Ascending aorta (tissue), 2 donors: ENCODE measurements at regions of chr19 and their contacts with region 1.

Region 1: GRCh38 chr19:49983645-49984229 is 22.8 kb upstream of the SIGLEC11 start:
- DNase-seq: peak in 1 of 2 donors; percentile 74
- H3K4me3 ChIP-seq: no peak overlapping the region
- H3K27ac ChIP-seq: no peak overlapping the region
- H3K4me1 ChIP-seq: no peaks in the 10 kb centered on the region
- H3K27me3 ChIP-seq: no peaks in the 10 kb centered on the region
- CTCF ChIP-seq: peak; percentile 73 to 78 (median 75)

Region 2: DNA sequence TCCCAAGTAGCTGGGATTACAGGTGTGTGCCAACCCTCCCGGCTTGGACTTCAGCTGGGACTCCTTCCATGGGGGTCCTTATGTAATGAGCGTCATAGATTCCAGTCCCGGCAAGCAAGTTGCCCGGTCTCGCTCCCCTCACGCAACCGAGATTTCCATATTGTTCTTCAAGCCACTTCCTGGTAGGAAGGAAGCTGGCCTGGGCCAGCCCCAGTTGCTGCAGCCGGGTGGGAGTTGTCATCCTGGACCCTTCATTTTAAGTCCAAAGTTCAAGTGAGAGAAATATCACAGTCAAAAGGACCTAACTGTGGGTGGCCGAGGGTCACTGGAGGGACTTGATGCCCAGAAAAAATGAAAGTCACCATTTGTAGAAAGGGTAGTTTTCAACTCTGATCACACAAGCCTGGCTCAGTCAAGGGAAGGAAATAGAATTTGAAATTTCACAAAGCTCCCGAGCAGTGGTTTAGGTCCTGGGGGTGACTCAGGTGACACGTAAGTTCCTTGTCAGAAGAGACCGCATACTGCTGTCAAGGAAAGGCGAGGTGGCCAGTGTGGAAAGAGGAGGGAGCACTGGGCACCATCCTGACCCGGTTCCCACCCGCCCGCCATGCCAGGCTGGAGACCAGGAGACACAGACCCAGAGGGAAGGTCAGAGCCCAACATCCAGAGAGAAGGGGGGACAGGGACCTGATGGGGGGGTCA is 1223.1 kb before region 1 on chr19:
- intact Hi-C with region 1: no loop called
- DNase-seq: no peak
- H3K4me3 ChIP-seq: no peak overlapping the region
- H3K27ac ChIP-seq: no peak overlapping the region
- H3K4me1 ChIP-seq: no peaks in the 10 kb centered on the region
- H3K27me3 ChIP-seq: no peaks in the 10 kb centered on the region
- CTCF ChIP-seq: no peak

Region 3: DNA sequence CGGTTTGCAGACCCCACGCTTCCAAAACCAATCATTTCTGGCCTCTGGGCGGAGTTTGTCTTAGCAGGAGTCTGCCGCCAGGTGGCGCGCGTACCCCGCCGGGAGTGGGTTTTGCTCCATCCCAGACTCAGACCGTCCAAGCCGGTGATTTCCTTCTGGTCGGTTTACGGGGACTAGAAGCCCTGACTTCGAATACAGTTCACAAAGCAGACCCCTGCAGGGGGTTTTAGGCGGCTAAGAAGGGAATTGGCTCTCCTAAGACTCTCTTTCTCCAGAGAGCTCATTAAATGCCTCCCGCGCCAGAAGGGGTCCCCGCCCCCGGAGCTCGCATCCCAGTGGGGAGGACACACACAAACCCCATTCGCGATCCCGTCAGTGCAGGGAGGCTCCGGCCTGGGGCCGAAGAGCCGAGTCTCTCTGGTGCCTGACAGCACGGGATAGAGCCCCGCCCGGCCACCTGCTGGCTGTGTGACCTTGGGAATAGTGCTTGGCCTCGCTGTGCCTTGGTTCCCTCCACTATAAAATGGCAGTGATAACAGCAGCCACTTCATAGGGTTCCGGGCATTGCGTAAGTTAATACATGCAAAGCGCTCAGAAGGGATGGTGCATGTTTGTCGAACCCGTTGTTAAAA is 45.9 kb before region 1 on chr19:
- intact Hi-C with region 1: loop called (anchors 1 kb)
- DNase-seq: peak in 1 of 2 donors; percentile 78
- H3K4me3 ChIP-seq: peak overlapping the region in 1 of 2 donors; percentile 30
- H3K27ac ChIP-seq: no peak overlapping the region
- H3K4me1 ChIP-seq: peaks cover 0 to 3% of the 10 kb centered on the region in 2 donors
- H3K27me3 ChIP-seq: no peaks in the 10 kb centered on the region
- CTCF ChIP-seq: peak; percentile 90 to 97 (median 95)

Region 4: GRCh38 chr19:50003810-50004419 is 20.2 kb after region 1 on chr19:
- intact Hi-C with region 1: loop called (anchors 2 kb)
- DNase-seq: peak; percentile 46 to 90
- H3K4me3 ChIP-seq: peak overlapping the region in 1 of 2 donors; percentile 50
- H3K27ac ChIP-seq: peak overlapping the region; percentile 89 to 95
- H3K4me1 ChIP-seq: peaks cover 22 to 24% of the 10 kb centered on the region in 2 donors
- H3K27me3 ChIP-seq: no peaks in the 10 kb centered on the region
- CTCF ChIP-seq: no peak